PC-3 (cell line): ENCODE measurements at regions of chr19 and their contacts with region 1.

Region 1: DNA sequence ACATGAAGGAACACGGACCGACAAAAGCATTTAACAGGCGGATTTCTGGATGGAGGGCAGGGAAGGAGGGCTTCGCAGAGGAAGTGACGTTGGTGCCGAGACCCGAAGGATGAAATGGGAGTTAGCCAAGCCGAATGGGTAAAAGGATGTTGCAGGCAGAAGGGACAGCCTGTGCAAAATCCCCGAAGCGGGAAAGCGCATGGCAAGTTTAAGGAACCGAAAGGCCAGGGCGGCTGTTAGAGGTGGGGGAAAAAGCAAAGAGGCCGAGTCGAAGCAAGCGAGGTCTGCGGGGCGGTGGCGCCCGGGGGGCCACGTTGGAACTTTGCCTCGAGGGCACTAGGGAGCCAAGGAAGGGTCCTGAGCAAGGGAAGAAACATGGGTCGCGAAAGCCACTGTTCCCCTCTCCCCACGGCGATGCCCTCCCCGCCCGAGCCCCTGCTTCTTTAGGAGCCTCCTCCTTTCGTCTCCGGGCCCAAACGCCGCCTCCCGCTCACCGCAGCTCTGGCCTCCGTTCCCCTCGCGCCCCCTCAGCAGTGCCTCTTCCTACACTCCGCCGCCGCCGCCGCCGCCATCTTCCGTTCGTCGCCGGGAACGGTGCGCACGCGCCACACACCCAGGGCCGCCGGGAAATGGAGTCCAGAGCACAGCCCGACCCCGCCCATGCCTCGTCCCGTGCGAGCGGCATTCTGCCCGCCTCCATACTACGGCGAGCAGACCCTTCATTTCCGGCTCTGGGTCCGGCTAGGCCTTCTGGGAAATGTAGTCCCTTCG is at the start of gene SYMPK:
- DNase-seq: peak; percentile 95
- ATAC-seq: peak; percentile 98
- H3K4me3 ChIP-seq: peak within 1 kb of the TSS; percentile 82
- H3K27ac ChIP-seq: peak within 1 kb of the TSS; percentile 39
- H3K4me1 ChIP-seq: no peaks in the 10 kb centered on the region
- H3K27me3 ChIP-seq: peaks cover 13% of the 10 kb centered on the region
- CTCF ChIP-seq: no peak
- total RNA-seq, gene SYMPK: 36.6 and 67.3 TPM in 2 replicates

Region 2: GRCh38 chr19:45882652-45883585 is 20.2 kb after region 1 on chr19:
- CTCF ChIA-PET with region 1: interaction called, 9 read pairs
- POLR2A ChIA-PET with region 1: no interaction called
- intact Hi-C with region 1: loop called (anchors 2 kb)
- DNase-seq: peak; percentile 85
- ATAC-seq: peak; percentile 25
- H3K4me3 ChIP-seq: peak overlapping the region; percentile 62
- H3K27ac ChIP-seq: no peak overlapping the region
- H3K4me1 ChIP-seq: peaks cover 20% of the 10 kb centered on the region; the same call in 1 of the 2 replicates
- H3K27me3 ChIP-seq: no peaks in the 10 kb centered on the region
- CTCF ChIP-seq: peak; percentile 94

Region 3: DNA sequence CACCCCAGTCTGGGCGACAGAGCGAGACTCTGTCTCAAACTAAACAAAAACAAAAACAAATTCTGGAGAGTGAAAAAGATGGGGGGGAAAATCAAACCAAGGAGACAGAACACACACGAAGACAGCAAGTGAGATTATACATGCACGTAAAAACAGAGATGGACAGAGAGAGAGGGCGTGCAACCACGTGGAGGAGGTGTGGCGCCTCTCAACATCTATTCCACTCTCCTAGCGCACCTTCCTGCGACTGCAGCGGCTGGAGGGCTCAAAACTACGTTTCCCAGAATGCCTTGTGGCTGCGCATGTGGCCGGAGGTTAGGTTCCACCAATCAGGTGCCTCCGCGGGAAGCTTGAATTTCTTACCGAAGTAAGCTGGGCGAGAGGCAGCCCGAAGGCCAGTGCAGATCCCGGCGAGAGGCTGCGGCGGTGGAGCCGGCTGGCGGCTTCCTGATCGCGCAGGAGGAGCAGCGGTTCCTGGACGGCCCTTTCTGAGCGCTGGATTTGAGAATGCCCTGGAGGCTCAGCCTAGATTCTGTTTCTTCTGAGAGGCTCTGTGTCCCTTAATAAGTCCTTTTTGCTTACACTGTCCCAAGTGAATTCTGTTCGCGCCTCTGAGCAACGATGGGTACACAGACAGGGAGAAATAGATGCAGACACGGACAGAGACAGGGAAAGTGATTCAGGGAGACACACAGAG is 65.0 kb after region 1 on chr19:
- CTCF ChIA-PET with region 1: no interaction called
- POLR2A ChIA-PET with region 1: no interaction called
- intact Hi-C with region 1: no loop called
- DNase-seq: peak; percentile 95
- ATAC-seq: peak; percentile 99
- H3K4me3 ChIP-seq: peak overlapping the region; percentile 61
- H3K27ac ChIP-seq: no peak overlapping the region
- H3K4me1 ChIP-seq: peaks cover 5% of the 10 kb centered on the region
- H3K27me3 ChIP-seq: no peaks in the 10 kb centered on the region
- CTCF ChIP-seq: peak; percentile 28; the same call in 1 of the 2 replicates

Region 4: GRCh38 chr19:46265217-46265828 is 402.6 kb after region 1 on chr19:
- CTCF ChIA-PET with region 1: no interaction called
- POLR2A ChIA-PET with region 1: no interaction called
- intact Hi-C with region 1: no loop called
- DNase-seq: peak; percentile 75
- ATAC-seq: peak; percentile 83
- H3K4me3 ChIP-seq: no peak overlapping the region
- H3K27ac ChIP-seq: no peak overlapping the region
- H3K4me1 ChIP-seq: peaks cover 8% of the 10 kb centered on the region
- H3K27me3 ChIP-seq: no peaks in the 10 kb centered on the region
- CTCF ChIP-seq: peak; percentile 77